IMR-90 (cell line): ENCODE measurements at regions of chr11 and their contacts with region 1.

Region 1: DNA sequence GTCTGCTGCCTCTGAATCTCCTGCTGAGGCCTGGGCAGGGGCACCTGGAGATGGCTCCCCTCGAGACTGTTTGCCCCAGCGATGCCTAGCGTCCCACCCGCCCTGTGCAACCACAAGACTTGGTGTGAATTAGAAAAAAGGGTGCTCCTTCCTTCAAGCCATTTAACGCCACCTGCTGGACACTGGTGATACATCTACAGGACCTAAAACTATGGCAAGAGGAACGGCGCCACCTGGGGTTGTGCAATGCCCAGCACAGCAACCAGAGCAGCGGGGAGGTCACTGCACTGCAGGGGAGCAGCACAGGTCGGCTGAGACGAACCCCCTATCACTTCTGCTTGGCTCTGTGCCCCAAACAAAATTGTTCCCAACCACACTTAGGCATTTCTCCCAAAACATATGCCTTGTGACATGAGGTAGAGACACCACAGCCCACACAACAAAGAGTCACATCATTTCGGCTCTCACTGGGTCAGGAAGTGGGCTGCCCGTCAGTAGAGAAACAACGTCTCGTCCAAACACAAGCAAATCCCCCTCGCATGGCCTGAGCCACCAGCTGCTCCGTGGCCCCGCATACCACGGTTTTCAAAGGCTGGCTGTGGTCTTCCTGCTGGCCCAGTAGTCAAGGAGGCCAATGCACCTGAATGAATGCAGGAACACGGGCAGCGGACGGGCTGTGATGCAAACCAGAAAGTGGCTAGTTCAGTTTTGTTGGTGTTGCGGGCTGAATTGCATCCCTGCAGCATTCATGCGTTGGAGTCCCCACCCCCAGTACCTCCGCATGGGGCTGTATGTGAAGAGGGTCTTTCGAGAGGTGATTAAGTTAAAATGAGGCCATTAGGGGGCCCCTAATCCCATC is 171.9 kb downstream of the SHANK2 start:
- DNase-seq: peak; percentile 58
- ATAC-seq: peak; percentile 76
- H3K4me3 ChIP-seq: no peak overlapping the region
- H3K27ac ChIP-seq: no peak overlapping the region
- H3K4me1 ChIP-seq: no peaks in the 10 kb centered on the region
- H3K27me3 ChIP-seq: no peaks in the 10 kb centered on the region
- CTCF ChIP-seq: peak; percentile 85
- POLR2A ChIP-seq: no peak
- RAD21 ChIP-seq: peak; percentile 68

Region 2: GRCh38 chr11:70699294-70700221 is 380.9 kb before region 1 on chr11:
- CTCF ChIA-PET with region 1: no interaction called
- POLR2A ChIA-PET with region 1: no interaction called
- dilution Hi-C with region 1: no loop called
- in situ Hi-C with region 1: no loop called
- intact Hi-C with region 1: no loop called
- DNase-seq: no peak
- ATAC-seq: peak; percentile 45
- H3K4me3 ChIP-seq: no peak overlapping the region
- H3K27ac ChIP-seq: no peak overlapping the region
- H3K4me1 ChIP-seq: peaks cover 9% of the 10 kb centered on the region; the same call in 1 of the 2 replicates
- H3K27me3 ChIP-seq: no peaks in the 10 kb centered on the region
- CTCF ChIP-seq: no peak
- POLR2A ChIP-seq: no peak
- RAD21 ChIP-seq: no peak

Region 3: DNA sequence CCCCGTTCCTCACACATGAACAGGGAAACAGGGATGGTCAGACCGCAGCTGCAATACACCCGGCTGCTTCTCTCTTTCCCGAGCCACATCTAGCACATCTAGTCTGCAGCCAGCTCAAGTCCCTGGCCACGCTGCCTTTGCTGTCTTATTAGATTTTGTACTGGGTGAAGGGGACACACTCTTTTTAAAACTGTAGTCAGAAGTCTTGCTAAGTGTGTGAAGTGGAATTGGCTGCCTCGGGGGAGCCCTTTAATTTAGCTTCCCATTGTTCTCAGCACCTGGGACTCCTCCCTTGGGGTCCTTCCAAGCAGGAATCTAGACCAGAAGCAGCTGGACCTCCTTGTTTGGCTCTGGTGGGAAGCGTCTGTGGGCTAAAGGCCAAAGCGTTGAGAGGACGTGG is 262.1 kb before region 1 on chr11:
- CTCF ChIA-PET with region 1: no interaction called
- POLR2A ChIA-PET with region 1: no interaction called
- dilution Hi-C with region 1: no loop called
- in situ Hi-C with region 1: no loop called
- intact Hi-C with region 1: loop called (anchors 5 kb)
- DNase-seq: no peak
- ATAC-seq: no peak
- H3K4me3 ChIP-seq: no peak overlapping the region
- H3K27ac ChIP-seq: no peak overlapping the region
- H3K4me1 ChIP-seq: no peaks in the 10 kb centered on the region
- H3K27me3 ChIP-seq: no peaks in the 10 kb centered on the region
- CTCF ChIP-seq: no peak
- POLR2A ChIP-seq: no peak
- RAD21 ChIP-seq: no peak